PC-9 (cell line): ENCODE measurements at regions of chr12 and their contacts with region 1.

Region 1: DNA sequence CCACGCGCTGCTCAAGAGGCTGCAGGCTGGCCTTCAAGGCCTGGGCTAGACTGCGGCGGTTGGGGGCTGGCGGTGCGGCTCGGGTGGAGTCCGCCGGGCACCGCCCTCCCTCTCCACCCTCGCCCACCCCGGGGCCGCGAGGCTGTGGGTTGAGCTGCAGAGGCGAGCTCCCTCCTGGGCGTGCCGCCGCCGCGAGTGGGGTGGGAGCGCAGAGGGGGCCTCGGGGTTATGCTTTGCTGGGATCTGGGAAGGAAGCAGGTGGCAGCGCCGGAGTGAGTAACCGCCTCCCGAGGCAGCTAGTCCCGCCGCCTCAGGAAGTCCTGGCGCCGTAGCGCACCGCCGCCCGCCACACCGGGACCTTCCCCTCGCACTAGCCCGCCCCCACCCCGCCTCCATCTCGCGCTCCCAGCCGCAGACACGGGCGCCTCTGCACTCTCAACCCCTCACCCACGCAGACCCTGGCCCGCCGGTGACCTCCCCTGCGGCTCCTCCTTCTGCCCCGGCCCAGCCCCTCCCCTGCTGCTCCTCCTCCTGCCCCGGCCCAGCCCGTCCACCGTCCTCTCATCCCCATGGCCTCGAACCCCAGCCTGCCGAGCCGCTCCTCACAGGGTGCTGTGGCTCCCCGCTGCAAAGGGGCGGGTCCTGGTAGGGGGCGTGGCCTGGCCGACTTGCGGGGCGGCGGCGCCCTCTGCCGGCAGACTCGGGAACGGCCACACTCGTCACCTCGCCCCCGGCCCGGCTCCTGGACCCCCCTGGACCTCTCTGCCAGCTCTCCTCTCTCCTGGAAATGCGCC is 16.6 kb downstream of the TAMALIN start:
- DNase-seq: peak; percentile 35 to 83
- H3K4me3 ChIP-seq: peak overlapping the region; percentile 71
- H3K27ac ChIP-seq: no peak overlapping the region
- H3K4me1 ChIP-seq: 0 out of 2 replicates have a peak, but pooled peaks cover 6% of the 10 kb centered on the region
- H3K27me3 ChIP-seq: peaks cover 4% of the 10 kb centered on the region; the same call in 1 of the 2 replicates
- CTCF ChIP-seq: peak; percentile 96

Region 2: DNA sequence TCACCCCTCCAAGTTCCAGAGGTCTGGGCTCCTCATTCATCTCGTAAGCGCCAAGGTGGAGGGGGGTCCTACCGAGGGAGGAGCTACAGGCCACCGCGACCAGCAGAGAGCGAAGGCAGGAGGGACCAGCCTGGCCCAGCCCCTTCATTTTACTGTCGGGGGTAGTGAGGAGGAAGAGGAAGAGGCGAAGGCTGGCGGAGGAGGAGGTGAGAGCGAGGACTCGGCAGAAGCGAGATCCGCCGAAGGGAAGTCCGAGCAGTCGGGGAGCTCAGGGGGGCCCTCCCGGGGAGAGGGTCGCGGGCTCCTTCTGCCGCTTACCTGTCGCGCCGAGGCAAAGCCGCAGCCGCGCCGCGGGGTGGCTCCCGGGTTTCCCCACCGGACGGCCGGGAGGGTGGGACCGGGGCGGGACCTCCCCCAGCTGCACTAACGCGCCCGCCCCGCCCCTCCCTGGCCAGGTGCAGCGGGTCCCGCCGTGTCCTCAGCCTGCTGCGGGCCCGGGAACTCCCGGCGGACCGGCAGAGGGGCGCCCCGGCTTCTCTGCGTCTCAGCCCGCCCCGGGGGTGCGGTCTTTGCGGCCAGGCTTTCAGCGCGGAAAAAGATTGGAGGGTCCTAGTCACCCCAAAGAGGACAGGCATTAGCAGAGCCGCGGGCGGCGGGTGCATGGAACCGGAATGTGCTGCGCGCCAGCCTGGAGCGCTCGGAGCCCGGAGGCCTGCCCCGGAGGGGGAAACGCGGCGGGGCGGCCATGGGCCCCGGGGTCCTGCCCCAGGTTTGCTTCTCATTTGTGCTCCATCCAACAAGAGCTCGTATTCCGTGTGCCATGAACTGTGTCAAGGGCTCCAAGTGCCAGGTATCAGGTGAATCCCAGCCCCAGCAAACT is 631.9 kb before region 1 on chr12 and contains the start of gene GALNT6:
- CTCF ChIA-PET with region 1: interaction called, 12 read pairs
- POLR2A ChIA-PET with region 1: no interaction called
- intact Hi-C with region 1: no loop called
- DNase-seq: peak; percentile 55 to 85
- H3K4me3 ChIP-seq: peak within 1 kb of the TSS; percentile 91
- H3K27ac ChIP-seq: peak within 1 kb of the TSS; percentile 36
- H3K4me1 ChIP-seq: peaks cover 59% of the 10 kb centered on the region
- H3K27me3 ChIP-seq: no peaks in the 10 kb centered on the region
- CTCF ChIP-seq: no peak
- total RNA-seq, gene GALNT6: 73.0 and 83.5 TPM in 2 replicates

Region 3: GRCh38 chr12:51994959-51995358 is 28.4 kb before region 1 on chr12:
- CTCF ChIA-PET with region 1: interaction called, 28 read pairs
- POLR2A ChIA-PET with region 1: interaction called, 3 read pairs
- intact Hi-C with region 1: loop called (anchors 1 kb)
- DNase-seq: no peak
- H3K4me3 ChIP-seq: no peak overlapping the region
- H3K27ac ChIP-seq: no peak overlapping the region
- H3K4me1 ChIP-seq: no peaks in the 10 kb centered on the region
- H3K27me3 ChIP-seq: no peaks in the 10 kb centered on the region
- CTCF ChIP-seq: no peak

Region 4: GRCh38 chr12:52069327-52070184 is 46.2 kb after region 1 on chr12 and contains the start of gene ATG101:
- CTCF ChIA-PET with region 1: interaction called, 20 read pairs
- POLR2A ChIA-PET with region 1: no interaction called
- intact Hi-C with region 1: loop called (anchors 1 kb)
- DNase-seq: peak; percentile 87
- H3K4me3 ChIP-seq: peak within 1 kb of the TSS; percentile 89
- H3K27ac ChIP-seq: peak within 1 kb of the TSS; percentile 80
- H3K4me1 ChIP-seq: peaks cover 20% of the 10 kb centered on the region
- H3K27me3 ChIP-seq: peaks cover 6% of the 10 kb centered on the region; the same call in 1 of the 2 replicates
- CTCF ChIP-seq: no peak
- total RNA-seq, gene ATG101: 44.6 and 59.0 TPM in 2 replicates

Region 5: DNA sequence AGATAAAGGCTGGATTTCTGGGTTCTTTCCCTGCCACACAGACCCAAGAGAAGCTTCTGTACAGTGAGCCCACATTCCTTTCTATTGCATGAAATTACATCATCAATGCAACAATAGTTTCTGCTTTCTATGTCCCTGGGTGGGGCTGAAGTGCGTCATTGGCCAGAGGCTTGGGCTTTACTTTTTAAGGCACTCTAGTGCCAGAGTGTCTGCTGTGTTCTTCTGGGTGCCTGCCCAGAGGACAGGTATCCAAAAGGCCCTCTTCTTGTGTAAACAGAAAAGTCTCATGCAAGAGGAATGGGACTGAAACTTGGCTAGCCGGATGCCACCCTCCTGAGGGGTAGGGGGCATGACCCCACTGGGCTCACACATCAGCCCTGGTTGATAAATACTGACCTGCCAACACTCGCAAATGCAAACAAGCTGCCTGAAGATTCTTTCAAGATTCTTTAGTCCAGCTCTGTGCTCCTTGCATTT is 257.0 kb after region 1 on chr12:
- CTCF ChIA-PET with region 1: no interaction called
- POLR2A ChIA-PET with region 1: no interaction called
- intact Hi-C with region 1: no loop called
- DNase-seq: peak; percentile 93 to 99
- H3K4me3 ChIP-seq: peak overlapping the region; percentile 40; the same call in 1 of the 2 replicates
- H3K27ac ChIP-seq: peak overlapping the region; percentile 100
- H3K4me1 ChIP-seq: peaks cover 76% of the 10 kb centered on the region
- H3K27me3 ChIP-seq: no peaks in the 10 kb centered on the region
- CTCF ChIP-seq: no peak

Region 6: GRCh38 chr12:52630599-52631200 is 607.3 kb after region 1 on chr12:
- CTCF ChIA-PET with region 1: interaction called, 16 read pairs
- POLR2A ChIA-PET with region 1: no interaction called
- intact Hi-C with region 1: no loop called
- DNase-seq: no peak
- H3K4me3 ChIP-seq: no peak overlapping the region
- H3K27ac ChIP-seq: no peak overlapping the region
- H3K4me1 ChIP-seq: no peaks in the 10 kb centered on the region; the same call in 1 of the 2 replicates
- H3K27me3 ChIP-seq: no peaks in the 10 kb centered on the region
- CTCF ChIP-seq: no peak

Region 7: GRCh38 chr12:53327435-53328042 is 1304.2 kb after region 1 on chr12:
- CTCF ChIA-PET with region 1: no interaction called
- POLR2A ChIA-PET with region 1: interaction called, 12 read pairs
- intact Hi-C with region 1: no loop called
- DNase-seq: no peak
- H3K4me3 ChIP-seq: no peak overlapping the region
- H3K27ac ChIP-seq: no peak overlapping the region
- H3K4me1 ChIP-seq: no peaks in the 10 kb centered on the region; the same call in 1 of the 2 replicates
- H3K27me3 ChIP-seq: 0 out of 2 replicates have a peak, but pooled peaks cover 3% of the 10 kb centered on the region
- CTCF ChIP-seq: peak; percentile 71